Panc1 (cell line): ENCODE measurements at regions of chr11 and their contacts with region 1.

Region 1: GRCh38 chr11:134072844-134073243 is 4.0 kb downstream of the JAM3 start:
- DNase-seq: no peak
- ATAC-seq: no peak
- H3K4me3 ChIP-seq: no peak overlapping the region
- H3K27ac ChIP-seq: no peak overlapping the region
- H3K4me1 ChIP-seq: peaks cover 7% of the 10 kb centered on the region; the same call in 1 of the 2 replicates
- H3K27me3 ChIP-seq: peaks cover 7% of the 10 kb centered on the region
- CTCF ChIP-seq: no peak

Region 2: DNA sequence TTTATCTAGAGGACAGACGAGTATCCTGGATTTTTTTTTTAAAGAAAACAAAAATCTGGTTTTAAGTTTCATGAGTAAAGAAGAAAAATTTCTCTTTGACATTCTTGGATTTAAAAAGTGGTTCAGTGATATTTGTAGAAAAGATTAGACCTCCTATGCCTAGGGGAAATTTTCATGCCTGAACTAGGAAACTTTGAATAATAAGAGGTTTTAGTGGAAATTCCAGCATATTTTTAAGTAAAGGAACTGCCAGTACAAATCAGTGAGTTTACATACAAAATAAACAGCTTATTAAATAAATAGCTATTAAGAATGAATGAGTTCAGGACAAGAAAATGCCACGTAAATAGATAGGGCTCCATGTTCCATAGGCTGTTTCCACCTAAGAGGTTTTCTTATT is 13.5 kb after region 1 on chr11:
- CTCF ChIA-PET with region 1: no interaction called
- POLR2A ChIA-PET with region 1: interaction called, 22 read pairs
- in situ Hi-C with region 1: no loop called
- intact Hi-C with region 1: no loop called
- DNase-seq: no peak
- ATAC-seq: no peak
- H3K4me3 ChIP-seq: no peak overlapping the region
- H3K27ac ChIP-seq: no peak overlapping the region
- H3K4me1 ChIP-seq: no peaks in the 10 kb centered on the region
- H3K27me3 ChIP-seq: no peaks in the 10 kb centered on the region
- CTCF ChIP-seq: no peak

Region 3: GRCh38 chr11:134170919-134171281 is 98.1 kb after region 1 on chr11:
- CTCF ChIA-PET with region 1: no interaction called
- POLR2A ChIA-PET with region 1: no interaction called
- in situ Hi-C with region 1: no loop called
- intact Hi-C with region 1: no loop called
- DNase-seq: no peak
- ATAC-seq: no peak
- H3K4me3 ChIP-seq: no peak overlapping the region
- H3K27ac ChIP-seq: no peak overlapping the region
- H3K4me1 ChIP-seq: no peaks in the 10 kb centered on the region
- H3K27me3 ChIP-seq: no peaks in the 10 kb centered on the region
- CTCF ChIP-seq: no peak